ENCODE measurements at regions of chr3 and their contacts with region 1.

Region 1: DNA sequence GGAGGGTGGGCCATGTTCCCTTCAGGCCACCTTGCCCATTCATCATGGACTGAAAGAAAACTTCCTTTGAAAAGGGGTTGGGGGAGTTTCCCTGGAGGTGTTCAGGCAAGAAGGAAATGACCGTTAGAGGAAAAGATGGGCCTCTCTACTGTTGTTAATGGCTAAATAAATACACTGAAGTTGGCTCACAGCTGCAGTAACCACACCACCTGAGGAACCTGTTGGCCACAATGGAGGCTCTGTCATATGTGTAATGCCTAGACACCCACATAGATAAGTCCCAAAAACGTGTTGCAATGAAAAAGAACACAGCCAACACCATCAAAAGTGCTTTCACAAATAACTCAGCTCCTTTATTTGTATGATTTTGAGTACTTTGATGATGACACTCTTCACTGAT is 38.2 kb upstream of the FAM3D start:
- DNase-seq: peak; percentile 35
- H3K4me3 ChIP-seq: no peak overlapping the region
- H3K27ac ChIP-seq: no peak overlapping the region
- H3K4me1 ChIP-seq: peaks cover 9% of the 10 kb centered on the region
- H3K27me3 ChIP-seq: no peaks in the 10 kb centered on the region
- CTCF ChIP-seq: no peak

Region 2: GRCh38 chr3:58577269-58577821 is 127.4 kb before region 1 on chr3 and contains the start of gene FAM107A:
- CTCF ChIA-PET with region 1: no interaction called
- dilution Hi-C with region 1: no loop called
- in situ Hi-C with region 1: no loop called
- intact Hi-C with region 1: no loop called
- DNase-seq: no peak
- H3K4me3 ChIP-seq: no peak within 1 kb of the TSS
- H3K27ac ChIP-seq: no peak within 1 kb of the TSS
- H3K4me1 ChIP-seq: peaks cover 3% of the 10 kb centered on the region
- H3K27me3 ChIP-seq: peaks cover 4% of the 10 kb centered on the region
- CTCF ChIP-seq: no peak
- total RNA-seq, gene FAM107A: under 0.01 TPM in 1 of 2 donors, not detected in the other

Region 3: DNA sequence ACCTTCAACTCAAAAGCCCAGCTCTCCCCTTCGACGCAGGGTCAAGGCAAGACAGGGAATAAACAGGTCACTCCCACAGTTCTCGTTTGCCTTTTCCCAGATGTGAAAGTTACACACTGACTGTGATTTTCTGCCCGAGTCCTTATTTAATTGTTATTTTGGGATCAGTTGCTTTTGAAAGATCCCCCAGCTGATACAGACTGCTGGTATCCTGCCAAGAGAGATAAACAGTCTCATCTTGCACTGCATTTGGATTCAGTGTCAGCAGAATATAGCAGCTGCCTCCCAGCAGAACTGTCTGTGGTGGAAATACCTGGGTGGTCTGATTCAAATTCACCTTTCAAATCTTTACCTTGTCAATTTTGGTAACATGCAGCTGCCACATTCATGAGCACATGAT is 17.8 kb after region 1 on chr3:
- CTCF ChIA-PET with region 1: no interaction called
- dilution Hi-C with region 1: no loop called
- in situ Hi-C with region 1: no loop called
- intact Hi-C with region 1: no loop called
- DNase-seq: no peak
- H3K4me3 ChIP-seq: no peak overlapping the region
- H3K27ac ChIP-seq: no peak overlapping the region
- H3K4me1 ChIP-seq: no peaks in the 10 kb centered on the region
- H3K27me3 ChIP-seq: no peaks in the 10 kb centered on the region
- CTCF ChIP-seq: no peak

Region 4: DNA sequence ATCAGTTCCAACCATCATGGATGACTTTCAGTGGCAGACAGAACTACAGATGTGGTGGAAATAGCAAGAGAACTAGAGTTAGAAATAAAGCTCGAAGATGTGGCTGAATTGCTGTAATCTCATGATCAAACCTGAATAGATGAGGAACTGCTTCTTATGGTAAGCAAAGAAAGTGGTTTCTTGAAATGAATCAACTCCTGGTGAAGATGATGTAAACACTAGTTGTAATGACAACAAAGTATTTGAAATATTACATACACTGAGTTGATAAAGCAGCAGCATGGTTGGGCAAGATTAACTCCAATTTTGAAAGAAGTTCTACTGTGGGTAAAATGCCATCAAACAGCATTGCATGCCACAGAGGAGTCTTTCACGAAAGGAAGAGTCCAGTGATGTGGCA is 93.6 kb after region 1 on chr3:
- CTCF ChIA-PET with region 1: no interaction called
- dilution Hi-C with region 1: loop called (anchors 5 kb)
- in situ Hi-C with region 1: no loop called
- intact Hi-C with region 1: no loop called
- DNase-seq: no peak
- H3K4me3 ChIP-seq: no peak overlapping the region
- H3K27ac ChIP-seq: no peak overlapping the region
- H3K4me1 ChIP-seq: no peaks in the 10 kb centered on the region
- H3K27me3 ChIP-seq: no peaks in the 10 kb centered on the region
- CTCF ChIP-seq: no peak

Measured in mammary epithelial cell (primary cell).